Caco-2 (cell line): ENCODE measurements at regions of chr1 and their contacts with region 1.

Region 1: DNA sequence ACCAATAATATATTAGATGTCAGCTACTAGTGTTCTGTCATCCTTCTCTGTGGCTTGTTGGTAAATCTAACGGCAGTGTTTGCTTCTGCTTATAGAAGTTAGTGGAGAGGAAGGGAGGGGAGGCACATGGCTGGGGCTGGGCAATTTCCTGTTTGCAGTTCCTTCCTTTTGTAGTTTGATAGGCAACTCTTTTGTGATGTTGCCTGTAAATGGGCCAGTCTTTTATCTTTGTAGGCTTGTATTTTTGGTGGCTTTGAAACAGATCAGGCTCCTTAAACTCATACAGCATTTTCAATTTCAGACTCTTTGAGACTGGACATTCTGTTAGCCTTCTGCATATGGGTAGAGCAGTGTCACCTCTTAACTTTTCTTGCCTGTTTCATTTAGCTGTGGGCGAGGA is 48.1 kb downstream of the CDC14A start:
- DNase-seq: no peak
- H3K4me3 ChIP-seq: no peak overlapping the region
- H3K4me3 Mint-ChIP-seq: no peak overlapping the region
- H3K27ac Mint-ChIP-seq: no peak overlapping the region
- H3K4me1 ChIP-seq: no peaks in the 10 kb centered on the region
- H3K4me1 Mint-ChIP-seq: no peaks in the 10 kb centered on the region
- H3K27me3 ChIP-seq: no peaks in the 10 kb centered on the region
- H3K27me3 Mint-ChIP-seq: no peaks in the 10 kb centered on the region
- CTCF ChIP-seq: no peak

Region 2: GRCh38 chr1:100188617-100189016 is 211.8 kb before region 1 on chr1:
- CTCF ChIA-PET with region 1: no interaction called
- POLR2A ChIA-PET with region 1: no interaction called
- intact Hi-C with region 1: no loop called
- DNase-seq: no peak
- H3K4me3 ChIP-seq: no peak overlapping the region
- H3K4me3 Mint-ChIP-seq: no peak overlapping the region
- H3K27ac Mint-ChIP-seq: no peak overlapping the region
- H3K4me1 ChIP-seq: no peaks in the 10 kb centered on the region
- H3K4me1 Mint-ChIP-seq: no peaks in the 10 kb centered on the region
- H3K27me3 ChIP-seq: no peaks in the 10 kb centered on the region
- H3K27me3 Mint-ChIP-seq: no peaks in the 10 kb centered on the region
- CTCF ChIP-seq: no peak

Region 3: GRCh38 chr1:100414693-100415497 is 14.5 kb after region 1 on chr1:
- CTCF ChIA-PET with region 1: no interaction called
- POLR2A ChIA-PET with region 1: no interaction called
- intact Hi-C with region 1: loop called (anchors 1 kb)
- DNase-seq: no peak
- H3K4me3 ChIP-seq: no peak overlapping the region
- H3K4me3 Mint-ChIP-seq: no peak overlapping the region
- H3K27ac Mint-ChIP-seq: no peak overlapping the region
- H3K4me1 ChIP-seq: no peaks in the 10 kb centered on the region
- H3K4me1 Mint-ChIP-seq: peaks cover 13% of the 10 kb centered on the region
- H3K27me3 ChIP-seq: no peaks in the 10 kb centered on the region
- H3K27me3 Mint-ChIP-seq: no peaks in the 10 kb centered on the region
- CTCF ChIP-seq: no peak

Region 4: DNA sequence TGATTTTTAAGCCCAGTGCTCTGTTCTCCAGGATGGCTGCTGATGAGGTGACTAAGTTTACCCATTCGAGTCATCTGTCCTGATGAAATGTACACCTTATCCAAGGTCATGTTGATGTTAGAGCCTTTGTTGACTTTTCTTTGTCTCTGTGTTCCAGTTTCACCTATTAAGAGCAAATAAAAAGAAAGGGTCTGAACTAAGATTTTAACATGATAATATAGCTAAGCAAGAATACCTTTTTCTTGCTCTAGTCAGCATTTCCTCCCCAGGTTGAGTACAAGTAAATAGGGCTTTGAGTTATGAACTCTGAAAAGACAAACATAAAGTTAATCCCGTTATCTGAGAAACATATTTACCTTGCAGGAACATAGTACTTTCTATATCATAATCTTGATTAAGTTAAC is 85.5 kb after region 1 on chr1:
- CTCF ChIA-PET with region 1: no interaction called
- POLR2A ChIA-PET with region 1: no interaction called
- intact Hi-C with region 1: no loop called
- DNase-seq: peak in 1 of 2 experiments; percentile 21
- H3K4me3 ChIP-seq: no peak overlapping the region
- H3K4me3 Mint-ChIP-seq: no peak overlapping the region
- H3K27ac Mint-ChIP-seq: no peak overlapping the region
- H3K4me1 ChIP-seq: peaks cover 7% of the 10 kb centered on the region; the same call in 1 of the 2 replicates
- H3K4me1 Mint-ChIP-seq: peaks cover 11% of the 10 kb centered on the region
- H3K27me3 ChIP-seq: no peaks in the 10 kb centered on the region
- H3K27me3 Mint-ChIP-seq: no peaks in the 10 kb centered on the region
- CTCF ChIP-seq: no peak